A673 (cell line): ENCODE measurements at regions of chr9 and their contacts with region 1.

Region 1: DNA sequence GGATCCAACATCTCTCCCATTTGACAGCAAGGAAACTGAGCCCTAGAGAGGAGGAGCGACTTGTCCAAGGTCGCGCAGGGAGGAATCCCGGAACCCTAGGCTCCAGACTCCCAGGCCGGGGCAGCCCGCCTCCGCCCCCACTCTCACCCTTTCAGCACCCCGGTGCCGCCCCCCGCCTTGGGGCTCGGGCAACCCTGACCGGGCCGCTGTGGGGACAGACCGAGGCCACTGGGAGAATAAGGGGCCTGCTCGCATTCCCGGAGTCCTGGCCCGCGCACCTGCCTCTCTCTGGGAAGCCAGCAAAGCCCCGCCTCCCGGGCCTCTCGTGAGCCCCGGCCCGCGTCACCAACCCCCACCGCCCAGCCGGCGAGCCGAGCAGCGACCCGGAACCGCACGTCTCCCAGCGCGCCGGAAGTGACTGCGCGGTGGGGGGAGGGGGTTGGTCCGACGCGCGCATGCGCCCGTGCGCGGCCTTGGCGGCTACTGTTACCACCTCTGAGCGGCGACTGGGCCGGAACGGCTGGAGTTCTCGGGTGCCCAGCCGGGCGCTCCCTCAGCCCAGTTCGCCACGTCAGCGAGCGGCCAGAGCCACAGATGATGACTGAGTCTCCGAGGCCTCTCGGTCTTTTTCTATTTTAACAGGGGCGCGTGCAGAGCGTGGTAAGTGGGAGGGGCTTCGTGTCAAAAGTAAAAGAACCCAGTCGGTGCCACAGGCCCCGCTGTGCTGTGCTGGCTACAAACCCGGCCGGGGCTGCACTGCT is at the start of gene GOLGA1:
- DNase-seq: peak; percentile 96
- H3K4me3 ChIP-seq: peak within 1 kb of the TSS; percentile 77
- H3K27ac ChIP-seq: peak within 1 kb of the TSS; percentile 95
- H3K4me1 ChIP-seq: no peaks in the 10 kb centered on the region
- H3K27me3 ChIP-seq: no peaks in the 10 kb centered on the region
- CTCF ChIP-seq: no peak
- total RNA-seq, gene GOLGA1: 21.7 and 23.9 TPM in 2 replicates

Region 2: DNA sequence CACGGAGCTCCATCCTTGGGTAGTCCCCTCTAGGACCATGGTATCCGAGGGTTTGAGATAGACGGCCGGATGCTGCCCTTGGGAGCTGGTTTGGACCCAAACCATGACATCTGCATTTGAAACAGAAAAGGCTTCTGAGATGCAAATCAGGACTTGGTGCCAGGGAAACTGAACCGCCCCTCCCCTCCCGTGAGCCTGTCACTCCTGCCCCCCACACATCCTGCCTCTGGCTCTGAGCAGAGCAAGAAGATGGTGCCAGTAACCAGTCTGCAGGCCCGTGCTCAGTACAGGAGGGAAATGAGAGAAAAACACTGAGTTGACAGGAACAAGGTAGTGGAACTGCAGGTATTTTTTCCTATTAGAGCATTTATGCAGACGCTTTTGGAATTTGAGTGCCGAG is 60.4 kb before region 1 on chr9:
- CTCF ChIA-PET with region 1: no interaction called
- POLR2A ChIA-PET with region 1: no interaction called
- intact Hi-C with region 1: no loop called
- DNase-seq: no peak
- H3K4me3 ChIP-seq: no peak overlapping the region
- H3K27ac ChIP-seq: no peak overlapping the region
- H3K4me1 ChIP-seq: no peaks in the 10 kb centered on the region
- H3K27me3 ChIP-seq: no peaks in the 10 kb centered on the region
- CTCF ChIP-seq: no peak

Region 3: GRCh38 chr9:125143375-125144090 is 202.7 kb after region 1 on chr9 and contains the start of gene SCAI:
- CTCF ChIA-PET with region 1: no interaction called
- POLR2A ChIA-PET with region 1: no interaction called
- intact Hi-C with region 1: loop called (anchors 1 kb)
- DNase-seq: peak; percentile 100
- H3K4me3 ChIP-seq: peak within 1 kb of the TSS; percentile 64
- H3K27ac ChIP-seq: peak within 1 kb of the TSS; percentile 48
- H3K4me1 ChIP-seq: no peaks in the 10 kb centered on the region
- H3K27me3 ChIP-seq: no peaks in the 10 kb centered on the region
- CTCF ChIP-seq: peak; percentile 99
- total RNA-seq, gene SCAI: 14.1 and 15.1 TPM in 2 replicates

Region 4: GRCh38 chr9:125529589-125530515 is 589.0 kb after region 1 on chr9:
- CTCF ChIA-PET with region 1: no interaction called
- POLR2A ChIA-PET with region 1: no interaction called
- intact Hi-C with region 1: no loop called
- DNase-seq: no peak
- H3K4me3 ChIP-seq: no peak overlapping the region
- H3K27ac ChIP-seq: no peak overlapping the region
- H3K4me1 ChIP-seq: peaks cover 32% of the 10 kb centered on the region
- H3K27me3 ChIP-seq: no peaks in the 10 kb centered on the region
- CTCF ChIP-seq: no peak